GM13977 (cell line): ENCODE measurements at regions of chr1 and their contacts with region 1.

Region 1: DNA sequence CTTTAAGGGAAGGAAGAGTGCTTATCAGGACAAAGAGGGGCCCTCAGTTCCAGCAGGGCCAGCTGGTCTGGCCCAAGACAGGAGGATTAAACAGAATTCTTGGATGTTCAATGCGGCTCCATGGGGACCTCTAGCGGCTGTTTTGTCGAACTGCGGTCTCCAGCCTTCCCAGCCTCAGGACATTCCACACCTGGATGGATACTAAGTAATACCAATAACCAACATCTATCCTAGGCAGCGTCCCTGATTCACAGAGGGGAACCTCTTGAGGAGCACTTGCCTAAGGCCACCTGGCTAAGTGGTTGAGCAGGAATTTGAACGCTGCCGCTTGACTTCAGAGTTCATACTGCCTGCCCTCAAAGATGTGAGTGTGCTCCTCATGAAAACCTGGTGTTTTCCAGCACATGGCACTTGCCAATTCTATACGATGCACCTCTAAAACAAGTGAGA is 15.5 kb upstream of the CD247 start:
- DNase-seq: peak; percentile 71
- CTCF ChIP-seq: peak; percentile 90

Region 2: DNA sequence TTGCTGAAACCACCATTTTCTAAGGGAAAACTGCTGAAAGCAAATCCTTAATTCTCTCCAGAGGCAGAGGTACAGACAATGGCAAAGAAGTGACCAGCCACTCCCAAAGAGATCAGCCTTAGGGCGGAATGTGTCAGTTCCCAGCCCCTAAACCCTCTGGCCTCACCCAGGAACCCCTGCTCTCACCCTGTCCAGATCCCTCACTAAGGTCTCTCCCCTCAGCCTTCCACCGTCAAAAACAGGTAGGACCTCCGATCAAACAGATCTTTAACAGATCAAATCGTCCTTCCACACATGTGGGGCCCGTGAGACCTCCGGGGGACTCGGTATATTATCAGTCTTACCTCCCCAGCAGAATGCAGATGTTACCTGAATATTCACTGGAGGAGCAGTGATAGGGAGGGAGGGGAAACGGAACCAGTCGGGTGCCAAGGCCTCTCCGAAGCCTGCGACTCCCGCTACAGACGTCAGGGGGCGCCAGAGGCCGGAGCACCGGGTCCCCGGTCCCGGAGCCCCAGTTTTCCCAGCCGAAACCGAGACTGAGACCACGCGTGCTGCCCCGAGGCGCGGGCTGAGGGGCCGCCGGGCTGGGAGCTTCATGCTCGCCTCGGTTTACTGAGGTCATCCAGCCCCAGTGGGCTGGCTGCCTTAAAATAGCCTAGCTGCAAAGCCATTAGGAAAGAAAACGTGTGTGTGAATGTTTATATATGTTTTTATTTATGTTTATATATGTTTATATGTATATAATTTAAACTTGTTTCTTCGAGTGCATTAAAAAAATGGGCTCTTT is 467.3 kb before region 1 on chr1:
- in situ Hi-C with region 1: loop called (anchors 10 kb)
- DNase-seq: peak; percentile 86
- CTCF ChIP-seq: peak; percentile 94

Region 3: GRCh38 chr1:167273027-167273800 is 260.7 kb before region 1 on chr1:
- in situ Hi-C with region 1: loop called (anchors 25 kb)
- DNase-seq: no peak
- CTCF ChIP-seq: no peak

Region 4: DNA sequence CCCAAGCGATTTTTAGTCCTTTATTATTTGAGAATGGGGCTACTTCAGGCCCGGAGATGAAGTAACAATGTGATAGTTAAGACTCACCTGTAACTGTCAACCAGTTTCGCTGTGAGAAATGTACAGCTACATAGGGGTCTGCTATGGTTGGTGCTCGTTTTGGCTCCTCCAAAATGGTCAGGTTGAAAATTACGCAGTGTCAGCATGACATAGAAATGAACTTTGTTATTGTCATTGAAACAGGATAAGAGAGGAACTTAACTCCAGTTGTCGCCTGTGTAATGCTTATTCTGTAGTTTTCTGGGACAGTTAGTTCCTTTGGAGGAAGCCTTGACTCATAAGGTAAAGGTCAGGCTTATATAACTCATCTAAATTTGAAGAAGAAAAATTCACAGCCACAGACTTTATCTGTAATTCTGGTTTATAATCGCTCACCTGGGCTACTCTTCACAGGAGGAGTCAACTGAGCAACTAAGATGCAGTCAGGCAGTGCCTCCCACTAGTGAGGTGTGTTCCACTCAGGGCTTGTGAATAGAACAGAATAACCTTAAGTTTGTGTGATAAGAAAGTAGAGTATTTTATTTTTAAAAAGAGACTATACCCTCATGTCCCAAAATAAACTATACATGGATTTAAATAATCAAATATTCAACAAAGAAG is 146.5 kb before region 1 on chr1:
- in situ Hi-C with region 1: no loop called
- DNase-seq: no peak
- CTCF ChIP-seq: no peak

Region 5: DNA sequence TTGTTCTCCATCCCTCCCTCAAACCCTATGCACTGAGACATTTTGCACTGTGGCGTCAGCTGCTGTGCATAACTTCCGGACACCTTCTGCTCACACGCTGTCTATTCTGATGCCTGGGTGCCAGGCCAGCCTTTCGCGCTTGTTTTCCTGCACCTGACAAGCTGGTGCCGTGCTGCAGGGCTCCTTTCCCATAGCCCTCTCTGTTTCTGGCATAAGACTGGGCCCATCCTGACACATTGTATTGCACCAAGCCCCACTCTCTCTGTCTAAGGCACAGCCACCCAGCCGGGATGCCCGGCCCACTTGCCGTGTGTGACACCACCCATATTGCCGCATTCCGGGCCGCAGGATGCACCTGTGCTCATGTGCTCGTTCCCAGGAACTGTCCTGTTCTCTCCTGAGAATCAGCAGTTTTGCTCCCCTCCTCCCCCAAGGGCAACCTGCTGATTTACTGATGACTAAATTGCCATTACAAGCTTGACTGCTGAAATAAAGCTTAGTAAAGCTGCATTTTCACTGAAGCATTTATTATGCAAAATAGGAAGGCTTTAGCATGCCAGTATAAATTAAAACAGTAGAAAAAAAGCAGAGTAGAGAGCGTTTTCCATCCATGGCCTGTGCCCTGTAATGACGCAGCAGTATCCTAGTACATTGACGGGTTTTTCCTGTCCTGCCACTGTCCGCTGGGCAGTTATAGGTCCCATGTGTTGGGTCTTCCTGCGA is 103.6 kb before region 1 on chr1:
- in situ Hi-C with region 1: no loop called
- DNase-seq: no peak
- CTCF ChIP-seq: no peak

Region 6: GRCh38 chr1:167617153-167618147 is 83.6 kb after region 1 on chr1:
- in situ Hi-C with region 1: no loop called
- DNase-seq: no peak
- CTCF ChIP-seq: no peak